ENCODE measurements at regions of chr1 and their contacts with region 1.

Region 1: GRCh38 chr1:174448974-174449373 is 1.2 kb downstream of the GPR52 start:
- DNase-seq: no peak
- ATAC-seq: no peak
- H3K4me3 ChIP-seq: no peak overlapping the region
- H3K27ac ChIP-seq: no peak overlapping the region
- H3K4me1 ChIP-seq: no peaks in the 10 kb centered on the region
- H3K27me3 ChIP-seq: no peaks in the 10 kb centered on the region
- CTCF ChIP-seq: no peak
- EP300 ChIP-seq: no peak
- POLR2A ChIP-seq: no peak
- RAD21 ChIP-seq: no peak

Region 2: GRCh38 chr1:174364996-174365736 is 83.8 kb before region 1 on chr1:
- CTCF ChIA-PET with region 1: no interaction called
- POLR2A ChIA-PET with region 1: interaction called, 13 read pairs
- RAD21 ChIA-PET with region 1: no interaction called
- SMC1A ChIA-PET with region 1: no interaction called
- in situ Hi-C with region 1: no loop called
- intact Hi-C with region 1: no loop called
- DNase-seq: no peak
- ATAC-seq: no peak
- H3K4me3 ChIP-seq: no peak overlapping the region
- H3K27ac ChIP-seq: no peak overlapping the region
- H3K4me1 ChIP-seq: peaks cover 3% of the 10 kb centered on the region; the same call in 1 of the 2 replicates
- H3K27me3 ChIP-seq: no peaks in the 10 kb centered on the region
- CTCF ChIP-seq: no peak
- EP300 ChIP-seq: no peak
- POLR2A ChIP-seq: no peak
- RAD21 ChIP-seq: no peak

Region 3: DNA sequence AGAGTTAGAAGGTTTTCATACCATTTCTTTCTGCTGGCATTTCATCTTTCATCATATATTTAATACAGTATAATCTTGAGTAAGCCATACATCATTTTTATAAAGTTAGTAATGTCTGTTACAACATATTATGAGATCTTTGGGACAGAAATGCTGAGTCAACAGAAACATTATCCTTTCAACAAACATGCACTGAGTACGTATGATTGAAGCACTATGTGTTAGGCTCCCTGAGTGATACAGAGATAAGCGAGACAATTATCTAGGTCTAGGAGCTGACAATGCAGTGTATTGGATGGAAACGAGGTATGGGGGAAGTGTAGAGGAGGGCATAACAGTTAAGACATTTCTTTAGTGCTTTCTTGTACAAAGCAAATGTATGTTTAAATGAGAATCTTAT is 20.9 kb before region 1 on chr1:
- CTCF ChIA-PET with region 1: no interaction called
- POLR2A ChIA-PET with region 1: no interaction called
- RAD21 ChIA-PET with region 1: no interaction called
- SMC1A ChIA-PET with region 1: no interaction called
- in situ Hi-C with region 1: no loop called
- intact Hi-C with region 1: no loop called
- DNase-seq: no peak
- ATAC-seq: no peak
- H3K4me3 ChIP-seq: no peak overlapping the region
- H3K27ac ChIP-seq: no peak overlapping the region
- H3K4me1 ChIP-seq: no peaks in the 10 kb centered on the region
- H3K27me3 ChIP-seq: no peaks in the 10 kb centered on the region
- CTCF ChIP-seq: no peak
- EP300 ChIP-seq: no peak
- POLR2A ChIP-seq: no peak
- RAD21 ChIP-seq: no peak

Measured in GM12878 (cell line).